Heart left ventricle (tissue), 16 donors: ENCODE measurements at regions of chr2 and their contacts with region 1.

Region 1: DNA sequence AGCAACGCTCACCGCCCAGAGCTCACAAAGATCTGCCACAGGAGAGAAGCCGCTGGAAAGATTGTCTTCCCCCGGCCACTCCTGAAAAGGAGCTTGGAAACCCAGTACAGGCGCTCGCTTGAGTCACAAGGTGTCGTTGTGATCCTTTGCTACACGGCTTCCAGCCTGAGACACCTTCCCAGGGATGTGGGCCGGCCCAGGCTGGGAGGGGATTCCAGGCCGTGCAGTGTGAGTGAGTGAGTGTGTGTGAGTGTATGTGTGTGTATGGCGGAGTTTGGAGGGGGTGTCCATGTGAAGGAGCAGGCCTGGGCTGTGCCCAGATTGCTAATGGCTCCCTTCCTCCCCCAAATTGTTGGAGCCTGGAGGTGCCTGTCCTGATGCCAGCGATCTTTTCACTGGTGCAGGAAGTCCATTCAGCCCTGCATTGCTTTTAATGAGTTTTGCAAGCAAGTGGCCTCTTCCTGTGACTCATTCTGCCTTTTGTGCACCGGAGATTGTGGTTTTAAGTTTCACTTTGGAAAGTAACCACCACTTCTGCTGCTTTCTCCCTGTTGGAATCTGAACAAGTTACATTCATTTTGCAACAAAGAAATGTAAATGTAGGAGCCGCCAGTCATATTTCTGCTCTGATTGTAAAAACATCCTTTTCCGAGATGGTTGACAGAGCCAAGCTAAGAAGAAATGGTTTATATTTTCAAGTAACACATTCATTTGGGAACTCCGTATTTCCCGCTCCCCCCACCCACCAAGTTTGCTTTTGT is 83.7 kb downstream of the LPIN1 start:
- DNase-seq: peak; percentile 69 to 79 (median 75)
- ATAC-seq: peak; percentile 85 to 92 (median 88)
- H3K4me3 ChIP-seq: peak overlapping the region in 10 of 12 donors; percentile 9 to 42 (median 24)
- H3K27ac ChIP-seq: peak overlapping the region in 11 of 12 donors; percentile 55 to 82 (median 71)
- H3K4me1 ChIP-seq: peaks cover 4 to 37% (median 21%) of the 10 kb centered on the region in 12 donors
- H3K27me3 ChIP-seq: no peaks in the 10 kb centered on the region
- CTCF ChIP-seq: peak in 9 of 12 donors; percentile 21 to 55 (median 39)
- POLR2A ChIP-seq: no peak

Region 2: GRCh38 chr2:11688222-11689069 is 141.7 kb before region 1 on chr2:
- intact Hi-C with region 1: no loop called
- DNase-seq: peak; percentile 83 to 91 (median 86)
- ATAC-seq: peak; percentile 81 to 90 (median 88)
- H3K4me3 ChIP-seq: peak overlapping the region in 10 of 12 donors; percentile 3 to 41 (median 30)
- H3K27ac ChIP-seq: peak overlapping the region in 9 of 12 donors; percentile 2 to 77 (median 59)
- H3K4me1 ChIP-seq: peaks cover 0 to 36% (median 14%) of the 10 kb centered on the region in 12 donors
- H3K27me3 ChIP-seq: peaks cover 0 to 6% (median 0%) of the 10 kb centered on the region in 9 donors
- CTCF ChIP-seq: peak; percentile 78 to 97 (median 87)
- POLR2A ChIP-seq: no peak

Region 3: DNA sequence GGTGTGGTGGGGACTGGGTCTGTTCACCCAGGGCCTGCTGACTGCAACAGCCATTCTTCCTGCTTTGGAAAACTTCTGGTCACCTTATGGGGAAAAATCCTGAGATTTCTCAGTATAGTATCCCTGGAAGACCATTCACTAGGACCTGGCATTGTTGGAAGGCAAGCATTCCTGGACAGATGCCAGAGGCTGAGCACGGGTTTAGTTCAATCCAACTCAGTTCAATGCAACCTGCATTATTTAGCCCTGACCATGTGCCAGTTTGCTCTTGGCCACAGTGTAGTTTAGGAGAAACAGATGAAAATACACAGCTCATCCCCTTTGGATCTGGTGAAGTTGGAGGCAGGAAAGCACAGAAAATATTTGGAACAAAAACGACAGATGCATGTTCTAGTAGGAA is 12.2 kb after region 1 on chr2:
- intact Hi-C with region 1: no loop called
- DNase-seq: peak in 1 of 5 donors; percentile 45
- ATAC-seq: peak in 2 of 4 donors; percentile 26 to 56
- H3K4me3 ChIP-seq: no peak overlapping the region
- H3K27ac ChIP-seq: no peak overlapping the region
- H3K4me1 ChIP-seq: no peaks in the 10 kb centered on the region
- H3K27me3 ChIP-seq: peaks cover 0 to 8% (median 0%) of the 10 kb centered on the region in 9 donors
- CTCF ChIP-seq: no peak
- POLR2A ChIP-seq: no peak

Region 4: GRCh38 chr2:12416600-12416999 is 586.5 kb after region 1 on chr2:
- intact Hi-C with region 1: loop called in 2 of 10 experiments (anchors 5 to 10 kb)
- DNase-seq: peak in 4 of 5 donors; percentile 33 to 68 (median 54)
- ATAC-seq: peak in 2 of 4 donors; percentile 20 to 58
- H3K4me3 ChIP-seq: no peak overlapping the region
- H3K27ac ChIP-seq: no peak overlapping the region
- H3K4me1 ChIP-seq: peaks cover 0 to 19% (median 0%) of the 10 kb centered on the region in 12 donors
- H3K27me3 ChIP-seq: no peaks in the 10 kb centered on the region
- CTCF ChIP-seq: peak; percentile 37 to 68 (median 54)
- POLR2A ChIP-seq: no peak

Region 5: GRCh38 chr2:13067508-13067907 is 1237.4 kb after region 1 on chr2:
- intact Hi-C with region 1: no loop called
- DNase-seq: no peak
- ATAC-seq: no peak
- H3K4me3 ChIP-seq: no peak overlapping the region
- H3K27ac ChIP-seq: no peak overlapping the region
- H3K4me1 ChIP-seq: peaks cover 0 to 4% (median 0%) of the 10 kb centered on the region in 12 donors
- H3K27me3 ChIP-seq: no peaks in the 10 kb centered on the region
- CTCF ChIP-seq: no peak
- POLR2A ChIP-seq: no peak